ENCODE measurements at regions of chr1 and their contacts with region 1.

Region 1: GRCh38 chr1:223133824-223134435 is 9.1 kb downstream of the TLR5 start:
- DNase-seq: peak; percentile 83 to 85
- ATAC-seq: peak; percentile 87 to 93 (median 90)
- H3K4me3 ChIP-seq: peak overlapping the region in 9 of 10 donors; percentile 17 to 54 (median 48)
- H3K27ac ChIP-seq: peak overlapping the region in 7 of 10 donors; percentile 7 to 56 (median 36)
- H3K4me1 ChIP-seq: peaks cover 6 to 56% (median 11%) of the 10 kb centered on the region in 9 donors
- H3K27me3 ChIP-seq: peaks cover 0 to 6% (median 0%) of the 10 kb centered on the region in 7 donors
- CTCF ChIP-seq: peak; percentile 95 to 98 (median 97)

Region 2: DNA sequence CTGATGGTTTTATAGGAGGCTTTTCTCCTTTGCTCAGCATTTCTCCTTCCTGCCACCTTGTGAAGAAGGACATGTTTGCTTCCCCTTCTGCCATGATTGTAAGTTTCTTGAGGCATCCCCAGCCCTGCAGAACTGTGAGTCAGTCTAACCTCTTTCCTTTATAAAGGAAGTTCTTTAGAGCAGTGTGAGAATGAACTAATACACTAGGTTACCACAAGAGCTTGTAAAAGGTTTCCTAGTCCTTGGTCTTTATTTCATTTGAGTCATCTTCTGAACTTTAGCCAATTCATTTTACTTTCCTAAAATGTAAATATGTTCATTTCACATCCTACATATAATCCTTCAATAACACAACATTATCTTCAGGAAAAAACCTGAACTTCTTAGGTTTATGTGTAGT is 951.3 kb before region 1 on chr1:
- intact Hi-C with region 1: no loop called
- DNase-seq: no peak
- ATAC-seq: no peak
- H3K4me3 ChIP-seq: no peak overlapping the region
- H3K27ac ChIP-seq: no peak overlapping the region
- H3K4me1 ChIP-seq: no peaks in the 10 kb centered on the region
- H3K27me3 ChIP-seq: no peaks in the 10 kb centered on the region
- CTCF ChIP-seq: no peak

Region 3: GRCh38 chr1:222792744-222793143 is 341.2 kb before region 1 on chr1:
- intact Hi-C with region 1: loop called in 4 of 10 experiments (anchors 2 to 5 kb)
- DNase-seq: no peak
- ATAC-seq: peak in 1 of 8 donors; percentile 57
- H3K4me3 ChIP-seq: no peak overlapping the region
- H3K27ac ChIP-seq: no peak overlapping the region
- H3K4me1 ChIP-seq: peaks cover 0 to 4% (median 0%) of the 10 kb centered on the region in 9 donors
- H3K27me3 ChIP-seq: no peaks in the 10 kb centered on the region
- CTCF ChIP-seq: peak; percentile 14 to 75 (median 63)

Region 4: DNA sequence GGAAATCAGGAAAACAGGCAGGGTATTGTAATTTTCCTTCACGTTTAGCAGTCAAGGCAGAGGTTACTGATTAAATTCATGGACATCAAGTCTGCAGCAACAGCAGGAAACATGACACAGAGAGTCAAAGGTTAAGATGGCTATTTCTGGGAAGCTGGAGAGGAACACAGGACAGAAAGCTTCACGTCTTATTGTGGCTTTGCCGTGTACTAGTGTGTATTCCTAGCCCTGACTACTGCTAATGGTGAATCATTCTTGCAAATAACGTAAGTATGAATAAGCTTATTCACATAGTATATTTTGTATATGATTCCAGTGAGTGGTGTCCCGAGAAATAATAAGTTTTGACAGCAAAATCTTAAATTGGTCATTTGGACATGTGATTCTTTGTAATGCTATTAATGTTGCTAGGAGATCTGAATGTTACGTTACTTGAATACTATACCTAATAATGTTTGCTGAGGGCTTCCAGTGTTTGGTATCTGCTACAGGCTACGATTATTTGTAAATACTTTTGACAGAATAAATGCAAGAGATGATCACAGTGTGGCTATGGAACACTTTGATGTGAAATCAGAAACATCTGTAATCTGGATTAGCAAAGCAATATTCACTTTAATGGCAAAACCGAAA is 241.7 kb before region 1 on chr1:
- intact Hi-C with region 1: no loop called
- DNase-seq: peak in 1 of 2 donors; percentile 20
- ATAC-seq: peak in 6 of 8 donors; percentile 23 to 82 (median 65)
- H3K4me3 ChIP-seq: no peak overlapping the region
- H3K27ac ChIP-seq: peak overlapping the region in 4 of 10 donors; percentile 16 to 67 (median 47)
- H3K4me1 ChIP-seq: peaks cover 0 to 32% (median 11%) of the 10 kb centered on the region in 9 donors
- H3K27me3 ChIP-seq: no peaks in the 10 kb centered on the region
- CTCF ChIP-seq: no peak

Region 5: DNA sequence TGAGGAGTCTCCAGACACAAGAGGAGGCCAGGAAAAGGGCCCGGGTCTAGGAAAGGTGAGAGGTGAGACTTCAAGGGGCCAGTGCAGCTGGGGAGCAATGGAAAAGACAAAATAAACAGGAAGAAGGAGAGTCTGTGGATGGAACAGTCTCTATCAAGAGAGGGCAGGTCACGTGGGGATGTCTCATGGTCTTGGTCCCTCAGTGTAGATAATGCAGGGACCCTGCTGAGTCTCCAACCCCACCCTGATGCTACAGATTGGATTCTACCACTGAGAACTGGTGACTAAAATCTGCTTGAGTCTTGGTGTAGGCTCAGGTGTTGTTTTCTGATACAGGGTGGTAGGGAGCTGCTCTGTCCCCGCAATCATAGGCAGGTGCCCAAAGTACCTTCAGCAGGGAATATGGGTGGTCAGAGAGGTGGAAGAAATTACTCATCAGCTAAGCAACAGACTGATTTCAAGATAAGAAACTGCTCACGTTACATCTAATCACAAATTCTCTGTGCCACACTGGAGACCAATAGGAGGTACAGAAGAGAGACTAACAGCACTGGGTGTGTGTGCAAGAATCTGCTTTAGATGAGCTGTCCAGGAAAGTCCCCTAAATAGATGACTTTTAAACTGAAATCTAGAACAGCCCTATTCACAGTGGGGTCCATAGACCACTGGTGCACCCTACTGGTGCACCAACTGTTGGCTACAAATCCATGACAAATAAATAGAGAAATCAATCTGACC is 110.6 kb after region 1 on chr1:
- intact Hi-C with region 1: loop called in 8 of 10 experiments (anchors 2 to 10 kb)
- DNase-seq: no peak
- ATAC-seq: peak in 6 of 8 donors; percentile 46 to 75 (median 68)
- H3K4me3 ChIP-seq: no peak overlapping the region
- H3K27ac ChIP-seq: no peak overlapping the region
- H3K4me1 ChIP-seq: no peaks in the 10 kb centered on the region
- H3K27me3 ChIP-seq: no peaks in the 10 kb centered on the region
- CTCF ChIP-seq: peak in 8 of 9 donors; percentile 8 to 65 (median 49)

Region 6: GRCh38 chr1:223363856-223364684 is 230.1 kb after region 1 on chr1 and contains the start of gene SUSD4:
- intact Hi-C with region 1: loop called in 2 of 10 experiments (anchors 5 kb)
- DNase-seq: peak; percentile 42 to 58
- ATAC-seq: peak; percentile 70 to 88 (median 78)
- H3K4me3 ChIP-seq: peak within 1 kb of the TSS; percentile 35 to 68 (median 56)
- H3K27ac ChIP-seq: peak within 1 kb of the TSS in 3 of 10 donors; percentile 25 to 67 (median 58)
- H3K4me1 ChIP-seq: peaks cover 4 to 23% (median 17%) of the 10 kb centered on the region in 9 donors
- H3K27me3 ChIP-seq: peaks cover 0 to 69% (median 11%) of the 10 kb centered on the region in 7 donors
- CTCF ChIP-seq: peak in 1 of 9 donors; percentile 4
- total RNA-seq, gene SUSD4: 1.6 to 36.5 (median 6.9) TPM

Region 7: DNA sequence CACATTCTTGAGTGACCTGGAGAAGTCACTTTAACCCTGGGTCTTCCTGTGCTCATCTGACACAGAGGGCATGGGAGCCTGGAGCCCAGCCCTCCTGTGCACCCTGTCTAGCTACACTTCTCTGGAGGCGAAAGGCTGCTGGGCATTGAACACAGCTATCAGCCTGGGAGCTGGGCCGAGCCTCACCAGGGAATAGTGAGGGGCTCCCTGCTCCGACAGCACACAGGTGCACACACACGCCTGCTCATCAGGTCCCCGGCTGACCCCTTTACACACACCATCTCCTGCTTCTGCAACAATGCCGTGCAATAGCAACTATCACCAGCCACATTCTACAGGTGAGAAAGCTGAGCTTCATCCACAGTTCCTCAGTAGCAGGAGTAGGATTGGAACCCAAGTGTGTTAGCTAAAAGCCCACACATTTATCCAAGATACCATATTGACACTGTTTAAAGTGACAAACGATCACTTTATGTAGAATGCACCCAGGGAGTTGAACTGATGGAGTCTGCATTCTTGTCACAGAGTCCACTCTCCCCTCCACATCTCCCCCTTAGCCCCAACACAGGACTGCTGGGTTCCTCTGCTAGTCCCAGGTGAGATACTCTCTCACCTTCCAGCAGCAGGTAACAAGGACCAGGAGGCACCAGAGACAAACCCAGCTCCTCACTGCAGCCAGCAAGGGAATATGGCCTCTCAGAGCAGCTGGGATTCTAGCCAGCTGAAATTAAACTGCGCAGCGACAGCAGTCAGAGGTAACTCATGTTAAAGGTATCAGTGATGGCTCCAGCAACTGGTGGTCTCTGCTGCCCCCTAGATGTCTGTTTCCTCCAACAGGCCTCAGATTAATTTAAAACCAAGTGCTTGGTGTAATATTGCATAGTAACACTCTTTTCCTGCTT is 549.9 kb after region 1 on chr1:
- intact Hi-C with region 1: loop called (anchors 1 to 10 kb)
- DNase-seq: peak in 1 of 2 donors; percentile 43
- ATAC-seq: peak in 5 of 8 donors; percentile 37 to 60 (median 49)
- H3K4me3 ChIP-seq: no peak overlapping the region
- H3K27ac ChIP-seq: no peak overlapping the region
- H3K4me1 ChIP-seq: no peaks in the 10 kb centered on the region
- H3K27me3 ChIP-seq: peaks cover 0 to 20% (median 8%) of the 10 kb centered on the region in 7 donors
- CTCF ChIP-seq: peak; percentile 33 to 69 (median 65)